ENCODE measurements at regions of chr7 and their contacts with region 1.

Region 1: DNA sequence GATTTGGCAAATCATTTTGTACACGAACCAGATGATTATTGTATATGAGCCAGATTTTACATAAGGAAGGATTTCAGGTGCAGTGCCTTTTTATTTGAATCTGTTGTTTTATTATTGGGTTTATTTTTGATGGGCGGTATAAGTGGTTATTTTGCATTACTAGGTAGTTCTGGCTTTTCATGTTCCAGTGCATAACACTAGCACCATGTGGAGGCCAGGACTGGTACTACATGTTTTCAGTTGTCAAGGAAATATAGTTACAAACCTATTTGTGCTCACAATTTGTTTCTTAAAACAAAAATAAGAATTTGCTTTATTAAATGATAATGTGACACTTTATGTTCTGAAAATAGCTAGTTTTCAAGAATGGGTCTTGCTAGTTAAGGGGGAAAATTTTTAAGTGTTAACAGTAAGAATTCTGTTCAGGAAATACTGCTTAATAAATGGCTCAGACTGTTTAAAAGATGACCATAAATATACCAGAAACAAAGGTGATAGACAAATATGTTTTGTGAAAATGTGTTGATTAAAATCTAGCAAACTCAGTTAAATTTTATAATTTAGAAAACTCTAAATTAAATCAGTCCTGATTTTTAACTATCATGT is 7.1 kb upstream of the SEMA3E start:
- DNase-seq: peak; percentile 78

Region 2: DNA sequence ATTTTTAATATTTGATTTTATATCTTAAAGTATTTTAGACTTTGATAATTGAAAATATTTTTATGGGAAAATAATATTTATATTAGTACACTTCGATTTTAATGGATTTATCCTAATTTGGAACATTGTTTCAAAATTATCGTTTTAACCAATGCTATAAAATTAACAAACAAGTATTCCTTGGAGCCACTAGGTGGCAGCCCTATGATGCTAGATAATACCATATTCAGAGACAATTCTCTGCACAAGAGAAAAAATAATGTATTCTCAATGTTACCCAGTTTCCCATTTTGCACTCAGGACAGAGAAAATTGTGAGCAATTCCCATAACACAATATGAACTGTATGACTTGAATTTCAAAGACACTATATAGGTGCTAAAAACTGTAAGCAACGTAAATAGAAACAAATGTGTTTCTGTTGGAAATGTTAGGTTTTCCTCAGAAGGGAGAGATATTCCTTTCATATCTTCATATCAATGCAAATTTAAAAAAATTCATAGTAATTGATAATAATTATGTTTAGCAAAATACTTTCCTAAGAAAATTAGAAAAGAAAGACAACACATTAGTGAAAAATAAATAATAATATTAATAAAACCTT is 245.0 kb before region 1 on chr7:
- in situ Hi-C with region 1: loop called (anchors 25 kb)
- DNase-seq: peak; percentile 74

Region 3: DNA sequence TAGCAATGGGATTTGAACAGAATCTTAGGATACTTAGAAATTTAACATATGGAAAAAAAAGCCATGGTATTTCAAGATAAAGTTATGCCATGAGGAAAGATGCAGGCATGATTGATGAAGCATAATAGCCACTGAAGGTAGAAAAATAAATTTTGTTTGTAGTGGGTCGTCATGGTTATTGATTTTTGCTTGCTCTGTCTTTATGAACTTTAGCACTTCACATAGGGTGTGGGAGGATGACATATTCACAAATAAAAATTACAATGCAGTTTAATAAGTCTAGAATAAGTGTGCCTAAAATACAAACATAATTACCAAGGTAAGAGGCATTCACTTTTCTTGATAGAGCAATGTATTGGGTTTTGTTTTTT is 122.0 kb after region 1 on chr7:
- in situ Hi-C with region 1: no loop called
- DNase-seq: no peak